ENCODE measurements at regions of chr9 and their contacts with region 1.

Region 1: GRCh38 chr9:96015876-96016686 is 140.6 kb downstream of the ERCC6L2 start:
- DNase-seq: peak; percentile 48
- H3K4me3 Mint-ChIP-seq: peak overlapping the region; percentile 44
- H3K27ac Mint-ChIP-seq: peak overlapping the region; percentile 100
- H3K4me1 Mint-ChIP-seq: peaks cover 64% of the 10 kb centered on the region
- H3K27me3 Mint-ChIP-seq: no peaks in the 10 kb centered on the region

Region 2: DNA sequence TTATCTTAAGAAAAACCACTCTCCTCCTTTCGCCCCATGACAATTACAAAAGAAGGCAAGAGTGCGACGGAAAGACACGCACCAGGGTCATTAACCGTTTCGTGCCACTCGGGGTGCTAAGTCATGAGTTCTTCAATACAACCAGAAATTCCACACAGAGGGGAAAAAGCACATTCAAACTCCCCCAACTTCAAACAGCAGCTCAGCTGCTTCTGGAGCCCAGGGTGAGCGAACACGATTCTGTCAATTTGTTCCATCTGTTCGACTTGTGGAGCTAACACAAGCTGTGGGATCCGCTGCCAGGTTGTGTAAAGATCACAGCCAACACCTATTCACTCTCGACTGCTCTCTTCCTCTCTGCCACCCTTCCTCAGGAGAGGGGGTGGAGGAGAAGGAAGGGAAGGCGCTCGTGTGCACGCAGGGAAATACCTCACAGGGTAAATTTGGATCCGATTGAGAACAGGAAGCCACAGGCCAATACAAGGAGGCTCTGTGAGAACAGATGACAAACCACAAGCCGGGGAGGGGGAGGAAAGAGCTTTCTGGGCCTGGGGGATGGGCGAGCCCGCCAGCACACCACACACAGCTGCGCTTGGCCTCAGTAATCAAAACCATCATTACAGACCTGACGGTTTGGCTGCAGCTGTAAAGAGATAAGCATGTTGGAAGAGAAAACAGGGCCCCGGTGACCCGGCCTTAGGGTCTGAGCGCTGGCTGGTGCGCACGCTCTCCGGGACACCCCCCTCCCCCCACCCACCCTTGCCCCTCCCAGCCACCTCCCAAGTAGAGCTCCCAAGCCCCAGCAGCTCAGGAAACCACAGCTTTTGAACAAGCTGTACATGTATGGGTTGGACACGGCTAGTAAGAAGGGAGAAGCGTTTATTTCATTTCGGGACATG is 553.6 kb before region 1 on chr9:
- intact Hi-C with region 1: loop called (anchors 5 kb)
- DNase-seq: peak; percentile 78
- H3K4me3 Mint-ChIP-seq: peak overlapping the region; percentile 77
- H3K27ac Mint-ChIP-seq: peak overlapping the region; percentile 82
- H3K4me1 Mint-ChIP-seq: peaks cover 34% of the 10 kb centered on the region
- H3K27me3 Mint-ChIP-seq: peaks cover 53% of the 10 kb centered on the region

Region 3: GRCh38 chr9:95808011-95808410 is 208.1 kb before region 1 on chr9:
- intact Hi-C with region 1: loop called (anchors 5 kb)
- DNase-seq: no peak
- H3K4me3 Mint-ChIP-seq: no peak overlapping the region
- H3K27ac Mint-ChIP-seq: no peak overlapping the region
- H3K4me1 Mint-ChIP-seq: peaks cover 23% of the 10 kb centered on the region
- H3K27me3 Mint-ChIP-seq: peaks cover 11% of the 10 kb centered on the region

Region 4: DNA sequence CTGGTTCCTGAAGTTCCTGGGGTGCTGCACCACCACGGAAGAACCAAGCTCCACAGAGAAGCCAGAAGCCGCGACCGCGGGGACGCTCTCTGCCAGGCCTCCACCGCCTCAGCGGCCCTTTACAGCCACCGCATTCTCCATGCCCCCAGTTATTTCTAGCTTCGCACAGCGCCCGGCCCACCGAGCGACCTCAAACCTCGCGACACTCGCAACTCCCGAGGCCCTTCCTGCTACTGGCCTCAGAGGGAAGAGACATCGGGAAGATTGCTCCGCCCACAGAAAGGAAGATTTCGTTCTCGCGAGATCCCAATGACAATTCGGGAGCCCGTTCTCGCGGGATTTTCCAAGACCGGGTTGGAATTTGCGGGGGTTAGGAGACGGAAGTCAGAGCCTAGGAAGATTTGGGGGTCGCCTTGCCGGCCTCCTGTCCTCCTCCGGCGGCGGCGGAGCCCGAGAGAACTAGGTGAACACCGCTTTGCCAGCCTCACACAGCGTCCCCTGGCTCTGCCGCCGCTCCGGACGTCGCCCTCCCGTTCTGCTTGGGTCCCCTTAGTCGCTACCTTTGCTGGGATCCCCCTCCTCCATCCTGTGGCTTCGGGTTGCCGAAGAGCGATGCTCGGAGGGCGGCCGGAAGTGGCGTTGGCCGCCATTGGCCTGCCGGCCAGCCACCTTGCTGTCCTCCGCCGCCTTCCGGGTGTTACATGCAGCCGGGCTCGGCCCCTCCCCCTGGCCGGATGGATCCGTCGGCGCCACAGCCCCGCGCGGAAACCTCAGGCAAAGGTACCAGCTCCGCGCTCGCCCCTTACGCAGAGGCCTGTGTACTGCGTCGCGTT is 140.6 kb before region 1 on chr9 and contains the start of gene ERCC6L2:
- intact Hi-C with region 1: loop called (anchors 1 kb)
- DNase-seq: peak; percentile 92
- H3K4me3 Mint-ChIP-seq: no peak within 1 kb of the TSS
- H3K27ac Mint-ChIP-seq: no peak within 1 kb of the TSS
- H3K4me1 Mint-ChIP-seq: peaks cover 33% of the 10 kb centered on the region
- H3K27me3 Mint-ChIP-seq: no peaks in the 10 kb centered on the region
- total RNA-seq, gene ERCC6L2: 31.2 and 33.7 TPM in 2 replicates

Region 5: GRCh38 chr9:96061293-96061987 is 45.4 kb after region 1 on chr9:
- intact Hi-C with region 1: loop called (anchors 2 kb)
- DNase-seq: peak; percentile 16
- H3K4me3 Mint-ChIP-seq: no peak overlapping the region
- H3K27ac Mint-ChIP-seq: no peak overlapping the region
- H3K4me1 Mint-ChIP-seq: peaks cover 39% of the 10 kb centered on the region
- H3K27me3 Mint-ChIP-seq: no peaks in the 10 kb centered on the region

Region 6: DNA sequence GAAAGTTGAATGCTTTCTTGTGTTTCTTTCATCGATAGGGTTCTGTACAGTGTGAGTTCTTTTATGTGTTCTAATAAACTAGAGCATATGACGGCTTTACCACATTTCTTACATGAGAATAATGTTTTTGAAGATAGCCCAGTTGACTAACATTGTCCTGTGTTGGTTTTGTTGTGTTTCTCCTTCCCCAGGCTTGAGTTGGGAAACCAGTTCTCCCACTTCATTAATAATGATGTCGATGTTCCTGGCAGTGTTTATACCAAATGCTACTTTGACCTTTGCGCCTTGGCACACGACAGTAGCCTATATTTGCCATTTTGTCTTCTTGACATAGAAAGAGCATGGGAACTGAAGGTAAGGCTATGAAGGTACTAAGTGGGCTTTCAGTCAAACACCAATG is 852.6 kb after region 1 on chr9:
- intact Hi-C with region 1: no loop called
- DNase-seq: no peak
- H3K4me3 Mint-ChIP-seq: no peak overlapping the region
- H3K27ac Mint-ChIP-seq: no peak overlapping the region
- H3K4me1 Mint-ChIP-seq: peaks cover 3% of the 10 kb centered on the region
- H3K27me3 Mint-ChIP-seq: peaks cover 6% of the 10 kb centered on the region

Measured in activated T-helper 1 cell treated with anti-CD3 and anti-CD28 coated beads, Interleukin-12 subunit alpha, Interleukin-12 subunit beta, Interleukin-2, Interleukin-4 antibody, amounts not matched to agents 30 ng/mL and 10 ng/mL and 1 ng/mL, durations not matched to agents 14 hours and 24 hours and 36 hours (primary cell).